Calu3 (cell line): ENCODE measurements at regions of chr2 and their contacts with region 1.

Region 1: DNA sequence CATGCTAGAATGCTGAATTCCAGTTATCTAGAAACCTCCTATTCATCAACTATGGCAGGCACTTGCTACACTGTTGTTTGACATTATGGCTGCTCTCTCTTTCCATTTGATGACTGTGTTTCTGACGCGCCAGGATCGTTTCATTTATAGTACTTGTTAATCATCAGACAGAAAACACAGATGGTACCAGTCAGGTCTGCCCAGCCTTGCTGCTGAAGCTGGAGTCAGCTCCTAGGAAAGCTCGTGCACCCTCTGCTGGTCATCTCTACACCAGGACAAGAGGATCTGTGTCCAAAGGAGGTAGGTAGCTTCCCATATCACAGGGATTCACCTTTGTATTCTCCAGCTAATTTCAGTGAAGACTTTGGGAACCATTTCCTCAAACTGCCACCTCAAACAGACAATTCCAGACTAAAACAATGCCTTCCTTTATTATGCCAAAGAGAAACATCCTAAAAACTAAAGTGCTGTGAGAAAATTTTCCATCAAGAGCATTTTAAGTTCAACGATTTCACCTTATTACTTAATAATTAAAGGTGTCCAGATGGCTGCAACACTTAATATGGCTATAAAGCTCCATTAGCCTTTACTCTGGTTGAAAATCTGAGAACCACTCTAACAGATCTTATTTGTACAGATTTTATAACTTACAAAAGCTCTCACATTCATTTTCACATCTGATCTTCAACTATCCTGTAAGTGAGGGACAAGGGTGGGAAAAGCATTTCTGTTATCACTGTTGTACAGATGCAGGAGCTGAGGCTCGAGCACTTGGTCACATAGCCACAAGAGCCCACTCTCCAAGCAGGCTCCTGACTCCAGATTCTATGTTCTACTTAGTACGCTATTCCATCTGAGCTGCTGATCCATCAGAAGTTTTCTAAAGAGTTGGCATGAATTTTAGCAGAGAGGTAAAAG is 17.5 kb downstream of the METTL8 start:
- DNase-seq: peak; percentile 90
- H3K4me3 Mint-ChIP-seq: no peak overlapping the region
- H3K27ac Mint-ChIP-seq: peak overlapping the region; percentile 85
- H3K4me1 Mint-ChIP-seq: peaks cover 23% of the 10 kb centered on the region
- H3K27me3 Mint-ChIP-seq: no peaks in the 10 kb centered on the region
- CTCF ChIP-seq: peak; percentile 60

Region 2: DNA sequence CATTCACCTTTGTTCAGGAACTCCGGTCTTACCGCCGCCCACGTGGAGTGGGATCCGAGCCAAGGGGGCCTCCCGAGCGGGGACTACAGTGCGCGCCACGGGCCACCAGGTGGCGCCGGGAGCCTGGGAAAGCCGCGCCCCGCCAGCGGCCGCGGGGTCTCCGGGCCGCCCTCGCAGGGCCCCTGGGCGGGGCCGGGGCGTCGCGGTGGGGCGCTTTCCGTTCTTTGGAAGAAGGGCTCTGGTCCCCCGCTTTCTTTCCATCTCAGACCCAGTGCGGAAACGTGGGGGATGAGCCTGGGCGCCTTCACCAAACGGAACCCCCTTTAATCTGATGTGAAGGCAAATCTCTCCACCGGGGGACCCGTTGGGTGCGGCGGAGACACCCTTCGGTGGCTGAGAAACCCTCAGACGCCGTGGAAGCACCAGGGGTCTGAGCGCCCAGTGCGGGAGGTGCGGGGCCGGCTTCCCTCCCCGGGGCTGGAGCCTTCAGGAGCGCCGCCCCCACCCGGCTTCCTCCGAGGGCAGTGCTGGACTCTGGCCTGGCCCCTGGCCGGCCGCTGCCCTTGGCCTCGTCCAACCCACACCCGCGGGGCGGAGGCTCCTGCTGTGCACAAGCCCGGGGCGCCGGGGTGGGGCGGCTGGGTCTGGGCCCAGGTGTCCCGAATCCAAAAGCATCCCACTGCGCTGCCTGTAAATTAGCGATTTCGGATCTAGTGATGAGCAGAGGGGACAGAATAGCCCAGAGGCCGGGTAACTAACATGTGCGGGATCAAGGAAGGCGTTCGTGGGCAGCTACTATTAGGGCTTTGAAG is 442.6 kb before region 1 on chr2:
- CTCF ChIA-PET with region 1: interaction called, 3 read pairs
- intact Hi-C with region 1: loop called (anchors 1 kb)
- DNase-seq: peak; percentile 91
- H3K4me3 Mint-ChIP-seq: peak overlapping the region; percentile 65
- H3K27ac Mint-ChIP-seq: peak overlapping the region; percentile 70
- H3K4me1 Mint-ChIP-seq: peaks cover 18% of the 10 kb centered on the region
- H3K27me3 Mint-ChIP-seq: no peaks in the 10 kb centered on the region
- CTCF ChIP-seq: peak; percentile 96

Region 3: GRCh38 chr2:171159372-171160118 is 256.7 kb before region 1 on chr2:
- CTCF ChIA-PET with region 1: interaction called, 4 read pairs
- intact Hi-C with region 1: loop called (anchors 5 kb)
- DNase-seq: peak; percentile 28
- H3K4me3 Mint-ChIP-seq: peak overlapping the region; percentile 74
- H3K27ac Mint-ChIP-seq: peak overlapping the region; percentile 90
- H3K4me1 Mint-ChIP-seq: peaks cover 25% of the 10 kb centered on the region
- H3K27me3 Mint-ChIP-seq: no peaks in the 10 kb centered on the region
- CTCF ChIP-seq: peak; percentile 39

Region 4: GRCh38 chr2:171271971-171272436 is 144.3 kb before region 1 on chr2:
- CTCF ChIA-PET with region 1: no interaction called
- intact Hi-C with region 1: loop called (anchors 5 kb)
- DNase-seq: peak; percentile 70
- H3K4me3 Mint-ChIP-seq: peak overlapping the region; percentile 5
- H3K27ac Mint-ChIP-seq: peak overlapping the region; percentile 49
- H3K4me1 Mint-ChIP-seq: peaks cover 19% of the 10 kb centered on the region
- H3K27me3 Mint-ChIP-seq: no peaks in the 10 kb centered on the region
- CTCF ChIP-seq: no peak

Region 5: DNA sequence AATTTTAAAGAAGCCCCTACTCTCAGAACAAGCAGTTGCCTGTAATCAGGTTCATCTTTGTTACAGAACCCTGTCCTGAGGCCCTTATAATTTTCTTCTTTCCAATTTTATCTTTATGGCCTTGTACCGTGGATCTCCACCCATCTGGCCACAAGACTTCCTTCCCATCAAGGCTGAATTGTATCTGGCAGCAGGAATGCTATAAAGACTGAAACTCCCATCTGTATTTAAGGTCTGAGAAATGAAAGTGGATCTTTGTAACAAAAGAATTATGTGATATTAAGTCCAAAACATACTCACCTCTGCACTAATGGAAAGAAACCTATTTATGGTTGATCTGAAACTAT is 74.2 kb before region 1 on chr2:
- CTCF ChIA-PET with region 1: interaction called, 14 read pairs
- intact Hi-C with region 1: loop called (anchors 5 kb)
- DNase-seq: no peak
- H3K4me3 Mint-ChIP-seq: no peak overlapping the region
- H3K27ac Mint-ChIP-seq: no peak overlapping the region
- H3K4me1 Mint-ChIP-seq: peaks cover 12% of the 10 kb centered on the region
- H3K27me3 Mint-ChIP-seq: no peaks in the 10 kb centered on the region
- CTCF ChIP-seq: no peak

Region 6: GRCh38 chr2:171347591-171348032 is 68.7 kb before region 1 on chr2:
- CTCF ChIA-PET with region 1: interaction called, 3 read pairs
- intact Hi-C with region 1: loop called (anchors 5 kb)
- DNase-seq: peak; percentile 16
- H3K4me3 Mint-ChIP-seq: no peak overlapping the region
- H3K27ac Mint-ChIP-seq: peak overlapping the region; percentile 51
- H3K4me1 Mint-ChIP-seq: peaks cover 26% of the 10 kb centered on the region
- H3K27me3 Mint-ChIP-seq: no peaks in the 10 kb centered on the region
- CTCF ChIP-seq: no peak

Region 7: DNA sequence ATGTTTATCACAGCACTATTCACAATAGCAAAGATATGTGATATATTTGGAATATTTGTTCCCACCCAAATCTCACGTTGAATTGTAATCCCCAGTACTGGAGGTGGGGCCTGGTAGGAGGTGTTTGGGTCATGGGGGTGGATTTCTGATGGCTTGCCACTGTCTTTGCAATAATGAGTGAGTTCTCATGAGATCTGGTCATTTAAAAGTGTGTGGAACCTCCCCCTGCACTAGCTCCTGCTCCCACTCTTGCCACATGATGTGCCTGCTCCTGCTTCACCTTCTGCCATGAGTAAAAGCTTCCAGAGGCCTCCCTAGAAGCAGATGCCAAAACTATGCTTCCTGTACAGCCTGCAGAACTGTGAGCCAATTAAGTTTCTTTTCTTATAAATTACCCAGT is 198.8 kb after region 1 on chr2:
- CTCF ChIA-PET with region 1: no interaction called
- intact Hi-C with region 1: no loop called
- DNase-seq: no peak
- H3K4me3 Mint-ChIP-seq: no peak overlapping the region
- H3K27ac Mint-ChIP-seq: no peak overlapping the region
- H3K4me1 Mint-ChIP-seq: no peaks in the 10 kb centered on the region
- H3K27me3 Mint-ChIP-seq: peaks cover 17% of the 10 kb centered on the region
- CTCF ChIP-seq: no peak